Activated CD4-positive, alpha-beta T cell treated with anti-CD3 and anti-CD28 coated beads for 36 hours (primary cell): ENCODE measurements at regions of chr11 and their contacts with region 1.

Region 1: DNA sequence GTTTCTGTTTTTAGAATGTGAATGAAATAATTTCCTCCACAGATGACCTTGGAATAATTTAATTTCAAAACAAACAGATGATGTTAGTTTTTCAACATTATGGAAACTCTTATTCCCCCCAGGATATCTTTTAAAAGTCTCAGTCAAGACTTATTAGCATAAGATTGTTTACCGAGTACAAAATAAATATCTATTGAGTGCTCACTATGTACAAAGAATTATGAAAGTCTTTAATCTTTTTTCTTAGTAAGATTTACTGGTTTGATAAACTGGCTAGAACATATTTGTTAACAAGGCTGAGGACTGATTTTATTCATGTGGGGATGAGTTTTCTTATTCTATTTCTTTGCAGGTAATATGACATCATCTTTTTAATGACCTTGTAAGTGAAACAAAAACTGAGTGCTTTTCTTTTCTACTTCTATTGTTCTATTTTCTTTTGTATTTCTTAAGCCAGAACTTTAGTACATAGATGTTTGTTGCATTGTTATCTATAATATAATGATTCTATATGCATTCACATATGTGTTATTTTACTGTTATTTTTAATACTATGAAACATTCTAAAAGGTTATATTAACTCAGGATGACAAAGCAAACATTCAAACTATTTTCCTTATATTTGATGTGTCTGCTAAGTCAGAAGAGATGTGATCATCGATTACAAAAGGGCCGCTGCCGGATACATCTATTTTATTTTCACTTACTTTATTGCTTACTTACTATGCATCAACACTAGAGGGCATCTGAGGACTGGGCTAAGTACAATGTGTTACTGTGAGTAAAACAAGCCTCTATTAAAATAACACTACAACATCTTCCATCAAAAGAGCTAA is 111.0 kb upstream of the ARHGAP42 start:
- DNase-seq: peak; percentile 24
- ATAC-seq: no peak
- H3K4me3 Mint-ChIP-seq: no peak overlapping the region
- H3K27ac Mint-ChIP-seq: no peak overlapping the region
- H3K4me1 Mint-ChIP-seq: no peaks in the 10 kb centered on the region
- H3K27me3 Mint-ChIP-seq: peaks cover 2% of the 10 kb centered on the region

Region 2: DNA sequence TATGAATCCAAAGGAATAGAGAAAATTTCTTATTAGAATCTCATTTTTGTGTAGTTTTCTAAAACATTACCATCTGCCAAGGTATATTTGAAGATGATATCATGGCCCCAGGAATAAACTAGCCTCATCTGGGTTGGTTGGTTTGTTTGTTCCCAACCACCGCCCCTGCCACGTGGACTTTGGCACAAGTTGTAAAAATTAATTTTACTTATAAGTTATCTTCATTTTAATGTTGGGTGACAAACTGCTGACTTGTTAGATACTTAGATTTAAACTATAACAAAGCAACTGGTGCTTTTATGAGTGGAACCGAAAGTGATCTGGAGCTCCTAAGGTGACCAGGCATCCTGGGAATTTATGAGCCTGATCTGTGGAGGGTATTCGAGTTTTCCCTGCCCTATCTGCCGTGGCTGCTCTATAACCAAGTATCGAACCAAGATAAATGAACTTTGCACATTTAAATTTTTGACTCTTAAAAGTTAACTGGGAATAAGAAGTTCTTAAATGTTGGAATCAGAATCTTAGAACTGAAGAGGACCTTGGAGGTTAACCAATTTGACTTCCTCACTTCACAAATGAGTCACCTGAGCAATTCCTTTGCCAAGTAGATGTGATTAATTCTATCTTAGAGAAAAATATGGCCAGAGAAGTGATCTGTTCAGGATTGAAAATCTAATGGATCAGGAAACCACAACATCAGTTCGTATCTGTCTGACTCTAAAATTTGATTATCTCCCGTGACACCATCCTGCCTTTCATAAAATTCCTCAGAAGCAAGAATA is 18.1 kb before region 1 on chr11:
- CTCF ChIA-PET with region 1: no interaction called
- POLR2A ChIA-PET with region 1: no interaction called
- intact Hi-C with region 1: no loop called
- DNase-seq: no peak
- ATAC-seq: no peak
- H3K4me3 Mint-ChIP-seq: no peak overlapping the region
- H3K27ac Mint-ChIP-seq: no peak overlapping the region
- H3K4me1 Mint-ChIP-seq: no peaks in the 10 kb centered on the region
- H3K27me3 Mint-ChIP-seq: peaks cover 2% of the 10 kb centered on the region

Region 3: GRCh38 chr11:100687630-100688395 is 111.7 kb after region 1 on chr11:
- CTCF ChIA-PET with region 1: no interaction called
- POLR2A ChIA-PET with region 1: no interaction called
- intact Hi-C with region 1: no loop called
- DNase-seq: peak; percentile 24
- ATAC-seq: peak; percentile 28
- H3K4me3 Mint-ChIP-seq: peak overlapping the region; percentile 58
- H3K27ac Mint-ChIP-seq: no peak overlapping the region
- H3K4me1 Mint-ChIP-seq: peaks cover 16% of the 10 kb centered on the region
- H3K27me3 Mint-ChIP-seq: peaks cover 27% of the 10 kb centered on the region

Region 4: GRCh38 chr11:100855466-100856067 is 279.5 kb after region 1 on chr11:
- CTCF ChIA-PET with region 1: interaction called, 5 read pairs
- POLR2A ChIA-PET with region 1: no interaction called
- intact Hi-C with region 1: loop called (anchors 1 to 10 kb)
- DNase-seq: no peak
- ATAC-seq: no peak
- H3K4me3 Mint-ChIP-seq: no peak overlapping the region
- H3K27ac Mint-ChIP-seq: no peak overlapping the region
- H3K4me1 Mint-ChIP-seq: no peaks in the 10 kb centered on the region
- H3K27me3 Mint-ChIP-seq: no peaks in the 10 kb centered on the region

Region 5: GRCh38 chr11:100930185-100930778 is 354.2 kb after region 1 on chr11:
- CTCF ChIA-PET with region 1: interaction called, 3 read pairs
- POLR2A ChIA-PET with region 1: no interaction called
- intact Hi-C with region 1: loop called in 1 of 2 experiments (anchors 1 kb)
- DNase-seq: no peak
- ATAC-seq: no peak
- H3K4me3 Mint-ChIP-seq: no peak overlapping the region
- H3K27ac Mint-ChIP-seq: no peak overlapping the region
- H3K4me1 Mint-ChIP-seq: no peaks in the 10 kb centered on the region
- H3K27me3 Mint-ChIP-seq: peaks cover 2% of the 10 kb centered on the region

Region 6: DNA sequence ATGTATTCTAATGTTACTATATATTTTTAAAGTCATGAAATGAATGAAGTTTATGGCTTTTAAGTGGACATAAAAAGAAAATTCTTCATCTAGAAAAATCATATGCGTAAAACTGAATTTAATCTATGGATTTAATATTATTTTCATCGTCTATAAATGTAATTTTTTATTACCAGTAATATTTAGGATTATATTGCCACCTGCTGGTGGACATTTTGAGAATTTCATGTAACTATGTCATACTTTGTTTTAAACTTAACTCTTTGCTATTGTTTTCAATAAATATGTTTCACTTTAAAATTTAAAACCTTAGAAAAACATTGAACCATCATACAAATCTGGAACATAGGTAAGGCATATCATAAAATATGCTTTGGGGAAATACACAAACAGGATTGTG is 1272.2 kb after region 1 on chr11:
- CTCF ChIA-PET with region 1: no interaction called
- POLR2A ChIA-PET with region 1: no interaction called
- intact Hi-C with region 1: loop called in 1 of 2 experiments (anchors 10 kb)
- DNase-seq: no peak
- ATAC-seq: no peak
- H3K4me3 Mint-ChIP-seq: no peak overlapping the region
- H3K27ac Mint-ChIP-seq: no peak overlapping the region
- H3K4me1 Mint-ChIP-seq: no peaks in the 10 kb centered on the region
- H3K27me3 Mint-ChIP-seq: peaks cover 4% of the 10 kb centered on the region

Region 7: DNA sequence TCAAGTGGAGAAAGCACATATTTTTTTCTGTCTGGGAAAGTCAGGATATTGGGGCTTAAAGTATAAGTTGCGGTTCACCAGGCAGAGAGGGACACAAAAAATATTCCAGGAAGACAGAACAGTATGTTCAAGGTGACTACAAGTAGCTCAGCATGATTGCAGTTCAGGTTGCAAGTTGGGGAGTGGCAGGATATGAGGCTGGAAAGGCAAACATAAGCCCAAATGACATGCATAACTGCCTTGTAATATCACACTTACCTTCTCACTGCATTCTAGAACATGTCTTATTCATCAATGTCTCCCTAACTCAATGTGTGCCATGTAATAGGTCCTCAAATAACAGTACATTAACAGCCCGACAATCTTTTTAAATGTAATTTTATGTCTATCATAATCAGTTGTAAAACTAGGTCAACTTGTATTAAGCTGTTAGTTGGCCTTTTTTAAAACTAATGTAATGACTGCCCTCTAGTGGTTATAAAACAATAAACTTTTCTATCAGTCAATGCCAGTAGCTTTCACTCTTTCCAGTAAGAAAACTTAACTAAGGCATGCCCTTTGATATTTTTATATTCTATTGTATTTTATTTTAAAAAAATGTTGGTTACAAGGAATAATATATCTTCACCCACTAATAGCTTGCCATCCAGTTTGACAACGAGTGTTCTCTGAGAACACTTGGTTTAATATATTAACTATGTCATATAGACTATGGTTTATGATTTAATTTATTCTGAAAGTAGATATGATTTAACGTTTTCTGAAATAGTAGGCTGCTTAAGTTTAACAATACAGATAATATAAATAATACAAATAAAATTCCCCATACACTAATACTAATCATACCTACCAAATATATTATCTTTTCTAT is 1431.7 kb after region 1 on chr11:
- CTCF ChIA-PET with region 1: no interaction called
- POLR2A ChIA-PET with region 1: no interaction called
- intact Hi-C with region 1: loop called in 1 of 2 experiments (anchors 5 kb)
- DNase-seq: no peak
- ATAC-seq: no peak
- H3K4me3 Mint-ChIP-seq: no peak overlapping the region
- H3K27ac Mint-ChIP-seq: no peak overlapping the region
- H3K4me1 Mint-ChIP-seq: peaks cover 2% of the 10 kb centered on the region
- H3K27me3 Mint-ChIP-seq: peaks cover 7% of the 10 kb centered on the region